Ascending aorta (tissue), 2 donors: ENCODE measurements at regions of chr9 and their contacts with region 1.

Region 1: DNA sequence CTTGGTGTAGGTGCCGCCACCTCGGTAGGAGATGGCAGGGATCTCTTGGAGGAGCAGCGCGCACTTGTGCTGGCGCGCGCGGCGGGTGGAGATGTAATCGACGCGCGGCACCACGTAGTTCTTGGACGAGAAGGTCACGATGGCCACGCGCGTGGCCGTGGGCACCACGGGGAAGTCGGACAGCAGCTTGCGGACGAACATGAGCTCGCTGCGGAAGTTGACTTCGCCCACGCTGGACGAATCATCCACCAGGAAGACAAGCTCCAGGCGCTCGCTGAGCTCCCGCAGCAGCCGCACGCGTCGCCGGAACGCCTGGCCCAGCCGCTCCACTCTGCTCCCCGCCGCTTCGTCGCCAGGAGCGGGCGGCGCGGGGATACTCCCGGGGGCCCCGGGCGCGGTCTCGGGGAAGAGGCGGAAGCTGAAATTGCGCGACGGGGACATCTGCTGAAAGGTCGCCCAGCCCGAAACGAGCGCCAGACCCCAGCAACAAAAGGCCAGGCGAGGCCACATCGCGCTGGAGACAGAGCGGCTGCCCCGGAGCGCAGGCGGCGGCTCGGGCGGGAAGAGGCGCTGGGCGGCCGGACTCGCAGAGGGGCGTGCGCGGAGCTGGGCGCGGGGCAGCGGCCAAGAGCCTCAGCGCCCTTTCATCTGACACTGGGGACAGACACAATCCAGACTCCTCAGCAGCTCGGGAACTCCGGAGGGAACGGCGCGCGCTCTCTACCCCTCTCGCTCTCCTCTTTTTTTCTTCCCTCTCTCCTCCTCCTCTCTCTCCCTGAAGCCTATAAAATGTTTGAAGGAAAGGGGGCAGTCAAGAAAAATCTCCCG is at the start of gene SVEP1:
- DNase-seq: peak in 1 of 2 donors; percentile 74
- H3K4me3 ChIP-seq: peak within 1 kb of the TSS; percentile 74 to 96
- H3K27ac ChIP-seq: peak within 1 kb of the TSS; percentile 80 to 84
- H3K4me1 ChIP-seq: peaks cover 0 to 2% of the 10 kb centered on the region in 2 donors
- H3K27me3 ChIP-seq: no peaks in the 10 kb centered on the region
- CTCF ChIP-seq: no peak
- total RNA-seq, gene SVEP1: 41.8 TPM

Region 2: GRCh38 chr9:110520120-110520701 is 59.0 kb before region 1 on chr9:
- intact Hi-C with region 1: loop called (anchors 5 kb)
- DNase-seq: no peak
- H3K4me3 ChIP-seq: peak overlapping the region in 1 of 2 donors; percentile 19
- H3K27ac ChIP-seq: no peak overlapping the region
- H3K4me1 ChIP-seq: peaks cover 3 to 6% of the 10 kb centered on the region in 2 donors
- H3K27me3 ChIP-seq: no peaks in the 10 kb centered on the region
- CTCF ChIP-seq: no peak

Region 3: GRCh38 chr9:110555551-110556331 is 23.5 kb before region 1 on chr9:
- intact Hi-C with region 1: loop called (anchors 2 kb)
- DNase-seq: peak in 1 of 2 donors; percentile 84
- H3K4me3 ChIP-seq: peak overlapping the region in 1 of 2 donors; percentile 29
- H3K27ac ChIP-seq: peak overlapping the region; percentile 58 to 69
- H3K4me1 ChIP-seq: peaks cover 4 to 27% of the 10 kb centered on the region in 2 donors
- H3K27me3 ChIP-seq: no peaks in the 10 kb centered on the region
- CTCF ChIP-seq: no peak